ENCODE measurements at regions of chr11 and their contacts with region 1.

Region 1: GRCh38 chr11:128311742-128312719 is 275.3 kb downstream of the ETS1 start:
- DNase-seq: no peak
- H3K4me3 ChIP-seq: no peak overlapping the region
- CTCF ChIP-seq: no peak

Region 2: DNA sequence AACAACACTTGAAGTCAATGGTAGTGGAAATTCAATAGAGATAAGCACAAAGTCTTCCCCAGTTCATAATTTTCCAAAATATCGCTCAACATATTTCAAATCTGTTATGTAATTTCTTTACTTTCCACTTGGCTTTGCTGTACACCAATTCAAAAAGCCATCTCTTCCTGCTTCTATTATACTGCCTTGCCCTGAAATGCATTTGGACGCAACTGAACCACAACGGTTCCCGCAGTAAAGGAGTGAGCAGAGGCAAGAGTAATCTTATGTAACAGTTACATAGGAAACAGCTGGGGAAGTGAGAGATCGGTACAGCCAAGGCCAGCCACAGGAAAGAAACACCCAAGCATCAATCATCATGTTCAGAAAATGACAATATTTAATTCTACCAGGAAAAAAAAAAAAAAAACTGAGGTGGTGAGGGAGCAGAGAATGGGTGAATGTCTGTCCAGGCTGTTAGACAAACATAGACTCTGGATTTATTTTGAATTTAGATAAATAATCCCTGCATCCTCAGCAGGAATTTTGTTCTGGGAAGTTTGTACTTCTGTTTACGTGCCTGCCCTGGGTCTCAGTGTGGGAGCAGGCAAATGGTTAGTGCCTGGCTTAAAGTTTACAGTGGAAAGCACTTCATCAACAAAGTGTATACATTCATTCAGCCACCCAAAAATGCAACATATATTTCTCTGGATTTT is 116.8 kb before region 1 on chr11:
- in situ Hi-C with region 1: no loop called
- DNase-seq: no peak
- H3K4me3 ChIP-seq: no peak overlapping the region
- CTCF ChIP-seq: no peak

Region 3: GRCh38 chr11:128279866-128280265 is 32.2 kb before region 1 on chr11:
- in situ Hi-C with region 1: no loop called
- DNase-seq: no peak
- H3K4me3 ChIP-seq: no peak overlapping the region
- CTCF ChIP-seq: no peak

Region 4: GRCh38 chr11:128389461-128389976 is 77.5 kb after region 1 on chr11:
- in situ Hi-C with region 1: loop called (anchors 5 kb)
- DNase-seq: no peak
- H3K4me3 ChIP-seq: no peak overlapping the region
- CTCF ChIP-seq: no peak